H1 (cell line): ENCODE measurements at regions of chr6 and their contacts with region 1.

Region 1: DNA sequence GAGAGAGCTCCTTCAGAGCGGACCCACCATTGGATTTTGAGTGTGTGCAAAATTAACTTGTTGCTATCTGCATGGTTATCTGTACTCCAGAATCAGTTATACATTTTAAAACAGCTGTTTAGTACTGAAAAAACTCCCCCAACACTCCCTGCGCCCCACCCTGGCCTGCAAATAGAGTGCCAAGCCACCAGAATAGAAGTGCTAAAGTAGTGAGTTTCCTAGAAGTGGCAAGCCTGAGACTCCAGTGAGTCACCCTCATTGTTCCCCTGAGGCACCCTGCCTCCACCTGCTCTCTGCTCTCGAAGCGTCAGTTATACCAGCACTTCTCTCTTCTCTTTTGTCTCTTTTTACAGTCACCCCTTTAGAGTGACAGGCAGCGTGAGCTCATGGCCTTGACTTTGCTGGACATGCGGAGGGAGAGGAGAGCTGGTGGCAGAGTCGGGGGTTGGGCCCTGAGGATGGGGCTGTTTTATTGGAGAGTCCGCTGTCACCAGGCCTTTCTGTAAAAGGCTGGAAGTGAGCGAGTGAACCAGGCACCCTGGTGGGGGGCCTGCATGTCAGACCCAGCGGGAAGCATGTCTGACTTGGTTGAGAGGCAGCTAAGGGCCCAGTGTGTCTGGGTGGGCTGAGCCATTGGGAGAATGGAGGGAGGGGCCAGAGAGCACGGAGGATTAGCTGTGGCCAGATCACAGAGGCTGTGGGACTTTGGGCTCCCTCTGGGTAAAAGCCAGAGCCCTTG is 10.4 kb downstream of the IGF2R start:
- DNase-seq: no peak
- H3K4me3 ChIP-seq: peak overlapping the region in 1 of 4 experiments; percentile 15; a peak in 3 of 8 replicates
- H3K27ac ChIP-seq: no peak overlapping the region
- H3K4me1 ChIP-seq: peaks cover 19 to 33% (median 29%) of the 10 kb centered on the region in 4 experiments
- H3K27me3 ChIP-seq: no peaks in the 10 kb centered on the region
- CTCF ChIP-seq: no peak
- EP300 ChIP-seq: no peak
- POLR2A ChIP-seq: no peak
- RAD21 ChIP-seq: no peak

Region 2: DNA sequence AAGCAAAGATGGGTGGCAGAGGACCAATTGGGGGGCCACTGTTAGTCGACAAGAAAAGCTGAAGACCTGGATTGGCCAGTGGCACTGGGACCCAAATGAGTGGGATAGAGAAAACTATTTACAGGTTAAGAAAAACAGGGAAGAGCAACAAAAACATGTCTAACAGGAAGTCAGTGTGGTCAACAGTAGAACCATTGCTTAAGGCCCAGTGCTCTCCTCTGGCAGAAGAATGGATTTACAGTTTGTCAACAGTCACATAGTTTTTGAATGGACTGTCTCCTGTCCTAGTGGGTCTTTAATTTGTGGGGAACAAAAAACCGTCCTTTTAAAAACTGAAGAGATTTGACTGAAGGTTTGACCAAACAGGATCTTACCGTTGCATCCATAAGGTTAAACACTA is 264.1 kb before region 1 on chr6:
- CTCF ChIA-PET with region 1: no interaction called
- POLR2A ChIA-PET with region 1: no interaction called
- DNase-seq: no peak
- H3K4me3 ChIP-seq: no peak overlapping the region
- H3K27ac ChIP-seq: no peak overlapping the region
- H3K4me1 ChIP-seq: no peaks in the 10 kb centered on the region
- H3K27me3 ChIP-seq: no peaks in the 10 kb centered on the region
- CTCF ChIP-seq: no peak
- EP300 ChIP-seq: no peak
- POLR2A ChIP-seq: no peak
- RAD21 ChIP-seq: no peak

Region 3: GRCh38 chr6:159968440-159969203 is 10.7 kb before region 1 on chr6 and contains the start of gene IGF2R:
- CTCF ChIA-PET with region 1: interaction called, 10 read pairs
- POLR2A ChIA-PET with region 1: interaction called, 13 read pairs
- DNase-seq: peak in 1 of 2 experiments; percentile 90
- H3K4me3 ChIP-seq: peak within 1 kb of the TSS; percentile 80 to 96 (median 81)
- H3K27ac ChIP-seq: peak within 1 kb of the TSS; percentile 43
- H3K4me1 ChIP-seq: peaks cover 5 to 19% (median 12%) of the 10 kb centered on the region in 4 experiments; a peak in 5 of 7 replicates
- H3K27me3 ChIP-seq: peaks cover 0 to 2% (median 0%) of the 10 kb centered on the region in 4 experiments; a peak in 1 of 7 replicates
- CTCF ChIP-seq: no peak
- EP300 ChIP-seq: 0 out of 3 replicates have a peak, but pooled peaks of 1 of the 2 experiments have one; percentile 14
- POLR2A ChIP-seq: peak; percentile 76 to 80
- RAD21 ChIP-seq: no peak
- total RNA-seq, gene IGF2R: 74.1 and 80.7 TPM in 2 replicates

Region 4: GRCh38 chr6:159989492-159990480 is 10.5 kb after region 1 on chr6:
- CTCF ChIA-PET with region 1: interaction called, 10 read pairs
- POLR2A ChIA-PET with region 1: interaction called, 4 read pairs
- DNase-seq: no peak
- H3K4me3 ChIP-seq: no peak overlapping the region
- H3K27ac ChIP-seq: no peak overlapping the region; the same call in 1 of the 2 replicates
- H3K4me1 ChIP-seq: peaks cover 0 to 6% (median 1%) of the 10 kb centered on the region in 4 experiments; a peak in 3 of 7 replicates
- H3K27me3 ChIP-seq: no peaks in the 10 kb centered on the region
- CTCF ChIP-seq: no peak
- EP300 ChIP-seq: no peak
- POLR2A ChIP-seq: no peak
- RAD21 ChIP-seq: no peak

Region 5: DNA sequence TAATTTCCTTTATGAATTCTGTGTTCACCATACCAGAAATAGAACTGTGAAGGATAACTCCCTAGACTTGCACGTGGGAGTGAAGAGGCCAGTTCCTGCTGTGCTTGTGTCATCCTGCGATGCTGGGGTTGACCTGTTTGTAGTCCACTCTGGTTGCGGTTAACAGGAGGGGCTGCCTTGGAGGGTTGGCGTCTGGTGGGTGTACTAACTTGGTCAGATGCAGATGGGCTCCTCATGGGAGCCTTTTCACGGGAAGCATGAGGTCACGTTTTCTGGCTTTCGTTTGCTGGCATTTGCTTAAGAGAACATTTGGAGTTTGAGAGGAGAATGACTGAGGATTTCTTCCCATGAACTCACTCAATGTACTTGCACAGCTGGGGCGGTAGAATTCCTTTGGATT is 30.8 kb after region 1 on chr6:
- CTCF ChIA-PET with region 1: no interaction called
- POLR2A ChIA-PET with region 1: no interaction called
- DNase-seq: no peak
- H3K4me3 ChIP-seq: no peak overlapping the region
- H3K27ac ChIP-seq: no peak overlapping the region
- H3K4me1 ChIP-seq: no peaks in the 10 kb centered on the region; a peak in 2 of 7 replicates
- H3K27me3 ChIP-seq: no peaks in the 10 kb centered on the region
- CTCF ChIP-seq: no peak
- EP300 ChIP-seq: no peak
- POLR2A ChIP-seq: no peak
- RAD21 ChIP-seq: no peak